ENCODE measurements at regions of chr11 and their contacts with region 1.

Region 1: DNA sequence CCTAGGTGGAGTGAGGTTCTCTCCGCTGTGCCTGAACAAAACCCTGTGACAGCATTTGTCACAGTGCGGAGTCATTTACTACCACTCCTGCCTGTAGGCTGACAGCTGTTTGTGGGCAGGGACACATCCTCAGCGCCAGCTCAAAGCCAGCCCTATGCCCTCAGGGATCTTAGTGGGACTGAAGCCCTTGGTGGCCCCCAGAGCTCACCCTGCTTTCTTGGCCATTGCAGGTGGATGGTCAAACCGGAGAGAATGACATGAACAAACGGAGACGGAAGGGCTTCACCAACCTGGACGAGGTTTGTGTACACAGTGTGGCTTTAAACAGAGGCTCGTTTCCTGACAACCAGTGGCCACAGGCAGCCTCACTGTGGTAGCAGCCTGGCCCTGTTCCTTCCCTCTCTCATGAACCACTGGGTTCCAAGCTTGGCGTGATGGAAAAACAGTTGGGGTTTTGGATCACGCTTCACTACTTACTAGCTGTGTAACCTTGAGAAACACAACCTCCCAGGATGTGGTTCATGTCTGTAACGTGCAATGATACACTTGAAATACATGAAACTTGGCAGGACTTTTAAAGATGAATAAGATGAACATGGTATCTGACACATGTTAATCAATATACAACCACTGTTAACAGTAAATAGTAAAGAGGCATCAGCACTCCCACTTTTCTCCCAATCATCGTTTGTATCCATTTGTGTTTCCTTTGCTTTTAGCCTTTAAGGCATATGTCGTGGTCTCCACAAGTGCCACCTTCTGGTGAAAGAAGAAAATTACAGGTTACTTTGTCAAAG is 125.8 kb downstream of the MICAL2 start:
- DNase-seq: peak; percentile 72
- H3K4me3 Mint-ChIP-seq: no peak overlapping the region
- H3K27ac Mint-ChIP-seq: peak overlapping the region; percentile 72
- H3K4me1 Mint-ChIP-seq: peaks cover 19% of the 10 kb centered on the region
- H3K27me3 Mint-ChIP-seq: no peaks in the 10 kb centered on the region

Region 2: DNA sequence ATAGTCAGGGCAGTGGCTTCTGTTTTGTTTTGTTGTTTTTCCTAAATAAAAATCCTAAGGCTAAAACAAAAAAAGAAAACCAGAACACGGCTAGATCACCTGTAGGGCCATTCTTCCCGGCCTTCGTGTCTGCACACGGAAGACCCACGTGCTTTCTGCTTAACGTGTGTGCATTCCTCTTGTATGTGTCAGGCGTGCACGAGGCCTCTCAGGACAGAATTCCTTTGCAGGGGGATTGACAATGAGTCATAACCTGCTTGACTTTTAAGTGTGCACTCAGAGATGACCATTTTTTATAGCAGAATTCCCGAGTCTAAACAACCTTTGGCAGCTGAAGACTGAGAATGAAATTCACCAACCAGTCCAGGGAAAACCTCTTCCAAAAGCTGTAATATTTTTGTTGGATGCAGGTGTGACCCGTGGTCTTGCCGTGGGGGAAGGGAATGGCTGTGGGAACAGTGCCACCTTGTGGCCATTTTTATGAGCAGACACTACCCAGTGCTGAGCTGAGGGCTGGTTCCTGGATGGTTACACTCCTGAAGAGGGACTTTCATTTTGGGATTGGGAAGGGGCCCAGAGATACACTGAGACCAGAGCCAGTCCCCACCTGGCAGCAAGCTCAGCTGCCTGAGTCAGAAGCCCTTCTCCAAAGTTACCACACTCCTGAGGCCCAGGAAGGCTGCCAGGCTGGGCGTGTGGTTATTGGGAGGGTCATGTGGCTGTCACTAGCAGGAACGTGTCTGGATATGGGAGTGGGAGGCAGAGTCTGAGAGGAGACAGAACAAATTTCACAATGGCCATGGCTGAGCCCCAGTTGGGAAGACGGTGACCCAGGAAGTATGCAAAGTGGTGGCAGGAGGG is 192.0 kb before region 1 on chr11:
- CTCF ChIA-PET with region 1: interaction called, 37 read pairs
- intact Hi-C with region 1: loop called (anchors 1 kb)
- DNase-seq: peak; percentile 79
- H3K4me3 Mint-ChIP-seq: no peak overlapping the region
- H3K27ac Mint-ChIP-seq: no peak overlapping the region
- H3K4me1 Mint-ChIP-seq: peaks cover 3% of the 10 kb centered on the region
- H3K27me3 Mint-ChIP-seq: peaks cover 8% of the 10 kb centered on the region

Region 3: GRCh38 chr11:12110201-12110713 is 125.9 kb before region 1 on chr11 and contains the start of gene MICAL2:
- CTCF ChIA-PET with region 1: interaction called, 13 read pairs
- intact Hi-C with region 1: loop called (anchors 1 kb)
- DNase-seq: peak; percentile 83
- H3K4me3 Mint-ChIP-seq: peak within 1 kb of the TSS; percentile 83
- H3K27ac Mint-ChIP-seq: peak within 1 kb of the TSS; percentile 91
- H3K4me1 Mint-ChIP-seq: peaks cover 25% of the 10 kb centered on the region
- H3K27me3 Mint-ChIP-seq: no peaks in the 10 kb centered on the region
- total RNA-seq, gene MICAL2: 48.7 to 54.6 TPM

Region 4: GRCh38 chr11:12159351-12160099 is 76.6 kb before region 1 on chr11:
- CTCF ChIA-PET with region 1: interaction called, 20 read pairs
- intact Hi-C with region 1: loop called (anchors 1 kb)
- DNase-seq: no peak
- H3K4me3 Mint-ChIP-seq: no peak overlapping the region
- H3K27ac Mint-ChIP-seq: no peak overlapping the region
- H3K4me1 Mint-ChIP-seq: peaks cover 42% of the 10 kb centered on the region
- H3K27me3 Mint-ChIP-seq: no peaks in the 10 kb centered on the region

Region 5: DNA sequence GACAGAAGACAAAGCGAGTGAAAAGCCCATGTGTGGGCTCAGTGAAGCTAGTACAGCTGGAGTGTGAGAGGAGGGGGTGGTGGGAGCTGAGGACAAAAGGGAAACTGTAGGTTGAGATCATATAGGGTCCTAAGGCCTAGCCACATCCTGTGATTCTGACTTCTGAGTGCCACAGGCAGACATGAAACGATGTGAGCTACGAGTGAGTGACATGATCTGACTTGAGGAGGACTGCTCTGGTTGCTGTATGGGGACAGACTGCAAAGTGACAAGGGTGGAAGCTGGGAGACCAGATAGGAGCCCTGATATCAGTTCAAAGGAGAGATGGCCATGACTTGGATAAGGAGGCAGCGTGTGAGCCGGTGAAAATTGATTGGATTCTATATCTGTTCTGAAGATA is 40.4 kb before region 1 on chr11:
- CTCF ChIA-PET with region 1: interaction called, 11 read pairs
- intact Hi-C with region 1: loop called (anchors 5 kb)
- DNase-seq: peak; percentile 72
- H3K4me3 Mint-ChIP-seq: peak overlapping the region; percentile 79
- H3K27ac Mint-ChIP-seq: peak overlapping the region; percentile 90
- H3K4me1 Mint-ChIP-seq: peaks cover 70% of the 10 kb centered on the region
- H3K27me3 Mint-ChIP-seq: no peaks in the 10 kb centered on the region

Region 6: DNA sequence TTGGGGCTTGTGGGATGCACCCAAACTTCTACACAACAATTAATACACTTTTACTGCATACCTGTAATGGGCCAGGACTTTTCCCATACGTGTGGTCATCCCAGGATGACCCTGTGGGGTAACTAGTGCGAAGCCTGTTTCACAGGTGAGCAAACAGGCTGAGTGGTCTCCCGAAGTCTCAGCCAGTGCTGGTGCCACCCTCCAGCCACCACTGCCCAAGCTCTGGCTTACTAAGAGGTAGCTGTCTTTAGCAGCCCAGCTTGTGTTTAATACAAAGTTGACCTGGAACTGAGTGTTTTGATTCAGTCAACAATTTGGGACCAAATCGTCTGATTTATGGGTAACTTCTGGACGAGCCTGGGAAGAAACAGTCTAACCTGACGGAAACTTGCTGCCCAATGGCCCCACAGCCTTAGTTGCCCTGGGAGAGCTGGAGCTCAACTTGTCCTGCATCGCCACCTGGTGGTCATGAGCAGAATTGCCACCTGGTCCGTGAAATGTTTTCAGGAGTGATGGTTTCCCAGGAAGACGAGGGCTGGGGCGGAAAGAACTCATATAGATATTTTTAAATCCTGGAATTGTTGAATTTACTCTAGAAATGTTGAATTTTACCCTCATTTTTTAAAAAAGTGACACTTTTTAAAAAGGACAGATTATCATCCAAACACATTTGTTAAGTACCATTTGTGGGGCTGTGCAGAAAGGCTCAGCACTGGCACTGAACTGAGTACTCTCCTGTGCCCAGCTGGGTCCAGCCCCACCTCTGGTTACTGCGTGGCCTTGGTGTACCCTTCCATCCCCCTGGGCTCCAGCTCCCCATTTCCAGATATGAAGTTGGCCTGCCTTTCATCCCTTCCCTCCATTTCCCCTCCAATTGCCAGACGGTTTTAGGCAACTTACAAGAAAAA is 45.7 kb after region 1 on chr11:
- CTCF ChIA-PET with region 1: interaction called, 6 read pairs
- intact Hi-C with region 1: loop called (anchors 1 kb)
- DNase-seq: peak; percentile 87
- H3K4me3 Mint-ChIP-seq: no peak overlapping the region
- H3K27ac Mint-ChIP-seq: no peak overlapping the region
- H3K4me1 Mint-ChIP-seq: peaks cover 2% of the 10 kb centered on the region
- H3K27me3 Mint-ChIP-seq: no peaks in the 10 kb centered on the region

Measured in activated naive CD4-positive, alpha-beta T cell treated with anti-CD3 and anti-CD28 coated beads for 36 hours (primary cell).